Posterior cingulate gyrus (tissue), 11 donors: ENCODE measurements at regions of chr22 and their contacts with region 1.

Region 1: GRCh38 chr22:49930739-49931412 is 12.4 kb downstream of the CRELD2 start:
- DNase-seq: peak in 7 of 10 donors; percentile 44 to 95 (median 74)

Region 2: GRCh38 chr22:49966774-49967705 is 36.2 kb after region 1 on chr22:
- intact Hi-C with region 1: loop called (anchors 5 kb)
- DNase-seq: peak; percentile 7 to 93 (median 34)

Region 3: DNA sequence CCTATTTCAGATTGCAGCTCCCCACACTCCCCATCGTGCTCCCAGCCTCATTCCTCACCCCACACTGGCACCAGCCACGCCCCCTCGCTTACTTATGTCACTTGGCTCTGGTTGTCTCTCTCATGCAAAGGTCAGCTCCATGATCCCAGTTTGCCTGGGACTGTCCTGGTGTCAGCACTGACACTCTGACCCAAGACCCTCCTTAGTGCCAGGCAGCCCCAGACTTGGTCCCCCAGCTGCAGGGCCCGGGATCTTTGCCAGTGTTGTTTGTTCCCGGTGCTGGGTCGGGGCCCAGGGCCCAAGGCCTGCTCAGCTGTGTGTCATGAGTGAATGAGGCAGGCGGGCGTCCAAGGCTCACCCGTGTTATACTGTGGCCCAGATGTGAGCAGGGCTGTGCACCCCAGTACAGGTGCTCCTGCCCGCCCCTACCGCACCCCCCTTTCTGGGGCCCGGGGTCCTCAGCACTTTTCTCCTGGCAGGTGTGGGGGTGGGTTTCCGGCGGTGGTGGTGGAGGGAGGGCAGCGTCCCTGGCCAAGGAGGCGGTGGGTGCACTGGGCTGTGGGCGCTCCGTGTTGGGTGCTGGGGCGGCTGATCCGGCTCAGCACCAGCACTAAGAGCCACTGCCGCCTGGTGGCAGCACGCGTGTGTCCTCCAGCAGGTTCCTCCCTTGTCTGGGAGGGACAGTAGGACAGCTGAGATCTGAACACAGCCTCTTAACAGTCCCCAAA is 62.2 kb after region 1 on chr22:
- intact Hi-C with region 1: loop called (anchors 1 kb)
- DNase-seq: peak; percentile 74 to 98 (median 89)

Region 4: GRCh38 chr22:50030297-50031188 is 99.7 kb after region 1 on chr22:
- intact Hi-C with region 1: loop called (anchors 1 kb)
- DNase-seq: peak; percentile 39 to 96 (median 74)

Region 5: GRCh38 chr22:50200461-50201190 is 269.8 kb after region 1 on chr22 and contains the start of gene SELENOO:
- intact Hi-C with region 1: loop called (anchors 10 kb)
- DNase-seq: peak; percentile 87 to 99 (median 94)